ENCODE measurements at regions of chr16 and their contacts with region 1.

Region 1: DNA sequence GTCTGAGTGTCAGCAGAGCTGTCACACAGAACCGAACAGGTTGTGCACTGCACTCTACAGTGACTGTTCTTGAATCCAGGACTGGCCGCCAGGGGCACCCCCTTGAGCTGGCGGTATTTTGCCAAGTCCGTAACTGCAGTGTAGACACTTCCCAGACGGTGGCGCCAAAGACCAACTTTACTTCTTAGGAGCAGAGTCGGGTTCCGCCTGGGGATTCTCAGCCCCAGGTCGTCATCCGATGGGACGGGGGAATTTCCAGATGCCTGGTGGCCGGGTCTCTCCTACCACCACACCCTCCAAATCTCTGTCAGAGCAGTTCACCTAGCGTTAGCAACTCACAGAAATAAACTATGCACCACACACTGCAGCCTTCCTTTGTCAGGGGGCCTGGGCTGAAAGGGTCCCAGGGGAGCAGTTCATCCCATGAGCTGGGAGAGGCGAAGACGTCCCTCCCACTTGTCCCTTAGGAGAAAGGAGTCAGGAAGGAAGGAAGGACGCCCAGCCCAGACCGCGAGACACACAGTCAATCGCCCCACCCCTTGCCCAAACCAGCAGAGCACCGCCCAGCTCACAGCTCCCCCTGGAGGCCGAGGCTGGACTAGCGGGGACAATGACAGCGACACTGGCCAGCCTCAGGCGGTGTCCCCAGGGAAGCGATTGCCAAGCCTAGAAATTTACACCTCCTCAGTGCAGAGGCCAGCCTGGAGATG is 7.4 kb upstream of the RIPOR1 start:
- DNase-seq: peak; percentile 97
- H3K4me3 ChIP-seq: peak overlapping the region; percentile 69
- H3K27ac ChIP-seq: peak overlapping the region; percentile 89
- H3K4me1 ChIP-seq: peaks cover 48% of the 10 kb centered on the region
- CTCF ChIP-seq: peak; percentile 95

Region 2: DNA sequence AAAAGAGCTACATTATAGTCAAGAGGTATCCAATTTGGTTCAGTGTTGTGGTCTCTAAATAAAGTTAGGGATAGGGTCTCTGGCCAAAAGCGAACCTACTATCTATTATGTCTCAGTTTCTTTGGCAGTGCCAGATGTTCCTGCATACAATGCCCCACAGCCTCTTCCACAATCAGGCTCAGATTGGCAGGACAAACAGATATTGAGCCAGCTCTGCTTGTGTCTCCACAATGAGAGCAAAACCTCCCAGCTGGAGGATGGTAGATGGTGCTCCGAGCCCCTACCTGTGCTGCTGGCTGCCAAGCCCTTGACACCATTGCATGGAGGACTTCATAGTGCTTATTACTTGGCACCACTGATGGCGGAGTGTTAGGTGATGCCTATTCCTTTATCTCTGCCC is 391.8 kb before region 1 on chr16:
- CTCF ChIA-PET with region 1: no interaction called
- POLR2A ChIA-PET with region 1: no interaction called
- intact Hi-C with region 1: no loop called
- DNase-seq: no peak
- H3K4me3 ChIP-seq: no peak overlapping the region
- H3K27ac ChIP-seq: no peak overlapping the region
- H3K4me1 ChIP-seq: no peaks in the 10 kb centered on the region
- CTCF ChIP-seq: no peak

Region 3: DNA sequence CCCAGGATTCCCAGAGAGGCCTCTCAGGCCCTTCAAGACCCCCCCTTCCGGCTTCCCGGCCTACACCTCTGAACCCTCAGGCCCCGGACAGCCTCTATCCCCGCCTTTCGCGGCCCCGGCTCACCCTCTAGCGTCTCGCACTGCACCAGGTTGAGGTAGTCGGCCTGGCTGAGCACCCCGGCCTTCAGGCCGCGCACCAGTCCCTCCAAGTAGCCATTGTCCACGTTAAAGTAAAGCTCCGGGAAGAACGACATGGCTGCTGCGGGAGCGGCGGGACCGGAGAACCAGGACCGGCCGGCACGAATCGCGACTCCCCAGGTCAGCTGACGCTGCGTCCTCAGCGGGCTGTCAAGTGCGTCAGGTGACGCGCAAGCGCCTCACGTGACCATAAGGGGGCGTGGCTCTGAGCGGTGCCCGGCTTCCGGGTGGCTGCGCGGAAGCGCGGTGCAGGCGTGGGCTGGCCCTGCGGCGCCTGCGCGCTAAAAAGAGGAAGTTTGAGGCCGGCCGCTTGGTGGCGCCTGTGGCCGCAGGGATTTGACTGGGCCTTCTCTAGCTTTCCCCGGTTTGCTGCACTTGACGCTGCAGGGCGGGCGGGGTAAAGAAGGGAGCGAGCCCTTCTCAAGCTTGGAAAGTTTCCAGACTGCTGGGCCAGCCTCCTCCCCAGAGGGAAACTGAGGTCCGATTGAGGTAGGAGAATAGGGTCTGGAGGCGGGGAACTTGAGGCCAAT is 40.3 kb before region 1 on chr16 and contains the start of gene ATP6V0D1:
- CTCF ChIA-PET with region 1: interaction called, 9 read pairs
- POLR2A ChIA-PET with region 1: interaction called, 23 read pairs
- intact Hi-C with region 1: loop called (anchors 1 kb)
- DNase-seq: peak; percentile 99
- H3K4me3 ChIP-seq: peak within 1 kb of the TSS; percentile 88
- H3K27ac ChIP-seq: peak within 1 kb of the TSS; percentile 72
- H3K4me1 ChIP-seq: peaks cover 39% of the 10 kb centered on the region
- CTCF ChIP-seq: peak; percentile 88
- total RNA-seq, gene ATP6V0D1: 13.5 and 24.4 TPM in 2 replicates

Region 4: GRCh38 chr16:67499106-67499505 is 22.1 kb before region 1 on chr16:
- CTCF ChIA-PET with region 1: no interaction called
- POLR2A ChIA-PET with region 1: no interaction called
- intact Hi-C with region 1: loop called (anchors 1 kb)
- DNase-seq: no peak
- H3K4me3 ChIP-seq: no peak overlapping the region
- H3K27ac ChIP-seq: no peak overlapping the region
- H3K4me1 ChIP-seq: peaks cover 15% of the 10 kb centered on the region
- CTCF ChIP-seq: no peak

Region 5: DNA sequence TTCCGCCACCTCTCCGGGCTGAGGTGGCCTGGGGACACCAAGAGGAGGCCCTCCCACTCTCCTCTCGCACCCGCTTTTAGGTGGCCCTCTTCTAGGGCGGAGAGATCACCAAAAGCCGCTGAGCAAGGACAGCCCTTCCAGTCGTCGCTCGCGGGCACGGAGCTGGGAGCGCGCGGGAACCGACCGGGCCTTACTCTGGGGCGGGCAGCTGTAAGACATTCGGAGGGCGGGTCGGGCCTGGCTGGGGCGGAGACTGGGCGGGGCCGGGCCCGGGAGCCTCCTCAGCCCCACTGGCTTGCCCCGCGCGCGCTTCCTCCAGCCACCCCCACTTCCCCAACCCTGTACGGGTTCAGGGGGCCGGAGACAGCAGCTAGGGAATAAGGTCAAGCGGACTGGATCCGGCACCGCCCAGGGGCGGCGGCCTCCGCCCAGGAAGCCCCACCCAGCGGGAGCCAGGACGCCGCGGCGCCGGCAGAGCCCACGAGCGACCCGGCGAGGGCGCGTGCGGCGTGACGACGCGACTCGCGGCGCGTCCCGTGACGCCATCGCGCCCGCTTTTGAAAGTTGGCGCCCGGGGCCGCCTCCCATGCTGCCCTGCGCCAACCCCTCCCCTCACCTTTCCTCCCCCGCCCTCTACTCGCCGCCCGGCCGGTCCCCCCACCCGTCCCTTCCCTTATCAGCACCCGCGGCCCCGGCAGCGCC is 40.7 kb after region 1 on chr16:
- CTCF ChIA-PET with region 1: interaction called, 6 read pairs
- POLR2A ChIA-PET with region 1: interaction called, 4 read pairs
- intact Hi-C with region 1: loop called (anchors 1 kb)
- DNase-seq: peak; percentile 98
- H3K4me3 ChIP-seq: peak overlapping the region; percentile 84
- H3K27ac ChIP-seq: peak overlapping the region; percentile 95
- H3K4me1 ChIP-seq: peaks cover 65% of the 10 kb centered on the region
- CTCF ChIP-seq: no peak

Region 6: DNA sequence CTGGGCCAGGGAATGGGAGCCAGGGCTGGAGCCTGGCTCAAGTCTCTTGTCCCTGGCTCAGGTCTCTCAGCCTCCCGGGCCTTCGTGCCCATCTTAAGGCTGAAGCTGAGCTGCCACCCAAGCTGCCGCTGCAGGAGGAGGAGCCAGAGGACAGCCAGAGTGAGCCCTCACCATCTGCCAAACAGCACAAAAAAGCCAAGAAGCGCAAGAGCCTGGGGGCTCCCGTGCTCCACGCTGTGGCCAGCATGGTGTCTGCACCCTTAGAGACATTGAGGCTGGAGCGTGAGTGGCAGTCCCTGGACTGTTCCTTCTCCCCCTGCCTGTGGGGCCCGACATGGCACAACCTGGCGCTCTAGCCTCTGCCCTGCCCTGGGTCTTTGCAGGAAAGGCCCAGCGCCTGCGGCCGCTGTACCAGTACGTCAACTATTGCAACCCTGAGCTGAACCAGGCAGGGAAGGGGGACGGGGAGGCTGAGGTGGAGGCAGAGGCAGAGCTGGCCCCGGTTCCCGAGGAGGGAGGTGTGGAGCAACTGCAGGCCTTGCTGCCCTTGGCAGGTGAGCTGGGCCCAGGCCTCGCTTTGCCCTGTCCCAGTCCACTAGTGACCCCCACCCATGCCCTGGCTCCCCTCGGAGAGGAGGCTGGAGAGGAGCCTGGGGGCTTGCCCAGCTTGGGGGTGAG is 146.7 kb after region 1 on chr16:
- CTCF ChIA-PET with region 1: interaction called, 6 read pairs
- POLR2A ChIA-PET with region 1: interaction called, 3 read pairs
- intact Hi-C with region 1: loop called (anchors 1 kb)
- DNase-seq: peak; percentile 96
- H3K4me3 ChIP-seq: peak overlapping the region; percentile 69
- H3K27ac ChIP-seq: peak overlapping the region; percentile 80
- H3K4me1 ChIP-seq: peaks cover 38% of the 10 kb centered on the region
- CTCF ChIP-seq: peak; percentile 79

Region 7: GRCh38 chr16:67928561-67929364 is 407.5 kb after region 1 on chr16:
- CTCF ChIA-PET with region 1: no interaction called
- POLR2A ChIA-PET with region 1: no interaction called
- intact Hi-C with region 1: loop called (anchors 1 kb)
- DNase-seq: peak; percentile 80
- H3K4me3 ChIP-seq: no peak overlapping the region
- H3K27ac ChIP-seq: no peak overlapping the region
- H3K4me1 ChIP-seq: peaks cover 10% of the 10 kb centered on the region
- CTCF ChIP-seq: peak; percentile 90

Measured in OCI-LY7 (cell line).